H1 (cell line): ENCODE measurements at regions of chr22 and their contacts with region 1.

Region 1: DNA sequence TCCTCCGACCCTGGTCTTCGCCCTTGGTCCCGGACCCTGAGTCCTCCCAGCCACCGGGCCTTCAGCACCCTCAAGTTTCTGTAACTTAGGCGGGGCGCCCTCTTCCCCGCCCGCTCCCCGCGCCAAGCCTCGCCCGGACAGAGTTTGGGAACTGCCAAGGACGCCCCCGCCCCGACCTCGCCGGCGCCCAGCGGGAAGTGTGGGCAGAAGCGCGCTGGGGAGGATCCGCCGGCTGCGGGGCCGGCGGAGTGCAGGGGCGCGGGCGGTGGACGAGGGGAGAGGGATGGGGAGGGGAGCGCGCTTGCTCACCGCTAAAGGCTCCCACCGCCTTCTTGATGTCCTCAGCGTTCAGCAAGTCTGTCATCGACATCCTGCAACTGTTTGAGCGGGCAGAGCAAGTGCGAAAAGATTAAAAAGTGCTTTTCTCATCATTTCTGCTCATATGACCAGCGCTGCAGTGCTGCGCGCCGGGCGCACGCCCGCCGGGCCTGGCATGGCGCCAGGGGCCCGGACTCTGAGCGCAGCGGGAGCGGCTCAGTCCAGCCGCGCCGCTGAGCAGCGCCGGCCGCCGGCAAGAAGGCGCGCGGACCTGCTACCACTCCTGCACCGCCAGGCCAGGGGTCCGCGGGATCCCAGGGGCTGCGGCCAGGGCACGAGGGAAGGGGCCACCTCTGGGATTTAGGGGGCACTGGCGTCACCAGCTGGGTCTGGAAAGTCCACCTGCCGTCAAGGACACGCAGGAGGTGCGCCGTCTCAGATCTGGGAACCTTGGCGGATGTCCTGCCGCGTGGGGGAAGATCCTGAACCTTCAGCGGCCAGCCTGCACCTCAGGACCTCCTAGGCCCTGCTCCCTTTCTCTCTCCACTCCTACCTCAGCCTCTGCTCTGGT is at the start of gene PVALB:
- DNase-seq: peak in 1 of 2 experiments; percentile 65
- H3K4me3 ChIP-seq: peak within 1 kb of the TSS; percentile 39 to 69 (median 59)
- H3K27ac ChIP-seq: no peak within 1 kb of the TSS
- H3K4me1 ChIP-seq: peaks cover 0 to 14% (median 9%) of the 10 kb centered on the region in 4 experiments; a peak in 6 of 7 replicates
- H3K27me3 ChIP-seq: peaks cover 21 to 53% (median 40%) of the 10 kb centered on the region in 4 experiments
- CTCF ChIP-seq: no peak
- EP300 ChIP-seq: no peak
- POLR2A ChIP-seq: no peak
- RAD21 ChIP-seq: no peak
- total RNA-seq, gene PVALB: 1.7 and 3.2 TPM in 2 replicates

Region 2: DNA sequence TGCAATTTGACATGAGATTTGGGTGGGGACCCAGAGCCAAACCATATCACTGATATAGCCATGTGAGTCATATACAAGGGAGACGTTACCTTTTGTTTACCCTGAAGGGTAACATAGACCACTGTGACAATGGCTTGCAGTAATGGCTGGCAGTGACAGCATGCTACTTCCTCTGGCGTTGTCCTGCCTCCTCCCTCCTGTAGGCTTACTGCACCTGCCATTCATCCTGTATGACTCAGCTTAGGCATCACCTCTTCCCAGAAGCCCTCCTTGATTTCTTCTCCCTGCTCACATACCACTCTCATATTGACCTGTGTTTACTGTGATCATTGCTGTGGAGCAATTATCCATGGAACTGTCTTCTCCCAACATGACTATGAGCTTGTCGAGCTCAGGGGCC is 11.9 kb after region 1 on chr22:
- CTCF ChIA-PET with region 1: interaction called, 10 read pairs
- POLR2A ChIA-PET with region 1: interaction called, 6 read pairs
- DNase-seq: no peak
- H3K4me3 ChIP-seq: no peak overlapping the region
- H3K27ac ChIP-seq: no peak overlapping the region
- H3K4me1 ChIP-seq: no peaks in the 10 kb centered on the region
- H3K27me3 ChIP-seq: no peaks in the 10 kb centered on the region; a peak in 1 of 7 replicates
- CTCF ChIP-seq: no peak
- EP300 ChIP-seq: no peak
- POLR2A ChIP-seq: no peak
- RAD21 ChIP-seq: no peak

Region 3: GRCh38 chr22:37019309-37020125 is 202.6 kb after region 1 on chr22 and contains the starts of genes MPST and TST:
- CTCF ChIA-PET with region 1: no interaction called
- POLR2A ChIA-PET with region 1: no interaction called
- DNase-seq: peak in 1 of 2 experiments; percentile 79
- H3K4me3 ChIP-seq: peak within 1 kb of the TSS; percentile 70 to 86 (median 78)
- H3K27ac ChIP-seq: peak within 1 kb of the TSS; percentile 89; the same call in 1 of the 2 replicates
- H3K4me1 ChIP-seq: peaks cover 0 to 21% (median 11%) of the 10 kb centered on the region in 4 experiments; a peak in 6 of 7 replicates
- H3K27me3 ChIP-seq: no peaks in the 10 kb centered on the region
- CTCF ChIP-seq: no peak; a peak in 1 of 4 replicates
- EP300 ChIP-seq: peak in 1 of 2 experiments; percentile 83; a peak in 2 of 3 replicates
- POLR2A ChIP-seq: peak in 1 of 2 experiments; percentile 76; a peak in 2 of 3 replicates
- RAD21 ChIP-seq: no peak
- total RNA-seq, gene MPST: 86.0 and 89.9 TPM in 2 replicates
- total RNA-seq, gene TST: 22.6 and 23.6 TPM in 2 replicates